ENCODE measurements at regions of chr1 and their contacts with region 1.

Region 1: DNA sequence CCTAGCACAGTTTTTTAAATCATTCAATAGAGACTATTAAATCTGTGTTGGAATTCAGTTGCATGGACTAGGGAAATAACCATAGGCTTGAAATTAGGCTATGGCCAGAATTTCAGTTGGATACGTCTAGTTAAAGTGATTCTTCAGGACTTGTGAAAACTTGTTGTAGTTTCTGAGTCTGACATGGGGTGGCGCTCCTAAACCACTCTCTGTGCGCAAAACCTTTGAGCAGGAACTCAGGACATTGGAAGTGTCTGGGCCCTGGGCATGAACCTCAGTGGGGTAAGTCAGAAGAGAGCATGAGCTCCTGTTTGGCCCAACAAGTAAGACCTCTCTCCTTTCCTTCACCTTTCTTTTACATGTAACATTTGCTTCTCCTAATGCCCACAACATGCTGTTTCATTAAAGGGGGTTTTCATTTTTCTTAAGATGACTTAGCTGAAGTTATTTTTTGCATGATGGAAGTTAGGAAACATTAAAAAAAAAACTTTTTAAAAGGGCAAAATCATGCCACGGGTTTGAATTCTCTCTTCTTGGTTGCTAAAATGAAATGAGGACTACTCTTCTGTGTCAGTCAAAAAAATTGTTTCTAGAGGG is 17.1 kb upstream of the CCDC190 start:
- DNase-seq: peak; percentile 53
- ATAC-seq: peak; percentile 77 to 84

Region 2: DNA sequence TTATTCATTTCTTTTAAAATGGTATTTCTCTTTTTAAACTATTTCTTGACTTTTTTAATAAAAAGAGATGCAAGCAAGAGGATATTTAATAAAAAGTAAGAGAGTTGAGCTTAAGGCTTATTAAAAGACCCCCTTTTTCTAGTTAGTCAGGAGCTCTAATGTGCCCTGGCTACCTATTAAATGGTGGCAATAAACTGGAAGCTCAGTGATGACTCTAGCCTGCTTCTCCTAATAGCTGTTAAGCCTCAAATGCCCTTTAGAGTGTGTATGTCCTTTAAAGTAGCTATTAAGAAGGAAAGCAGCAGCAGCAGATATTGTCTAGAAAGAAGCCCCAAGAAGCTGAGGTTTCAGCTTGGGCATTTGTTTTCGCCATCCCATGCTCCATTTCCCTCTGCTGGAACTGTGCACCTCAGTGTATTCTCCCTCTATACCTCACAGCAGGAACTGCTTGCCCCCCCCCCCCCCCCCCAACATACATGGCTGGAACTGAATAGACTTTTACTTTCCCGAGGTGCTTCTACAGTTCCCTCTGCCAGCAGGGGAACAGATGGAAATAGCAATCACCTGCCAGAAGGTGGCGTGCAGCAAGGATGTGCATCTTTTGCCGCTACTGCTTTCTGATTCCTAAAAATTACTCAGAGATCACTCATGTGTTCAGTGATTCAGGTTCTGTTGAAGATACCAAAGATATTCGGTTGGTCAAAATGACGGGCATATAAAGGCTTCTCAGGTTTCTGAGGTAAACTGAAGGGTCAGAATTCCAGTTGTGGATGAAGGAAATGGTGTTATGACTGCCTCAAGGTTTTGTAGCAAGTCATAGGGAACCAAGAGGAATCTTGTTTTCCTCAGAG is 193.5 kb after region 1 on chr1:
- intact Hi-C with region 1: loop called (anchors 5 kb)
- DNase-seq: peak; percentile 69
- ATAC-seq: peak; percentile 38 to 55